ENCODE measurements at regions of chrX and their contacts with region 1.

Region 1: DNA sequence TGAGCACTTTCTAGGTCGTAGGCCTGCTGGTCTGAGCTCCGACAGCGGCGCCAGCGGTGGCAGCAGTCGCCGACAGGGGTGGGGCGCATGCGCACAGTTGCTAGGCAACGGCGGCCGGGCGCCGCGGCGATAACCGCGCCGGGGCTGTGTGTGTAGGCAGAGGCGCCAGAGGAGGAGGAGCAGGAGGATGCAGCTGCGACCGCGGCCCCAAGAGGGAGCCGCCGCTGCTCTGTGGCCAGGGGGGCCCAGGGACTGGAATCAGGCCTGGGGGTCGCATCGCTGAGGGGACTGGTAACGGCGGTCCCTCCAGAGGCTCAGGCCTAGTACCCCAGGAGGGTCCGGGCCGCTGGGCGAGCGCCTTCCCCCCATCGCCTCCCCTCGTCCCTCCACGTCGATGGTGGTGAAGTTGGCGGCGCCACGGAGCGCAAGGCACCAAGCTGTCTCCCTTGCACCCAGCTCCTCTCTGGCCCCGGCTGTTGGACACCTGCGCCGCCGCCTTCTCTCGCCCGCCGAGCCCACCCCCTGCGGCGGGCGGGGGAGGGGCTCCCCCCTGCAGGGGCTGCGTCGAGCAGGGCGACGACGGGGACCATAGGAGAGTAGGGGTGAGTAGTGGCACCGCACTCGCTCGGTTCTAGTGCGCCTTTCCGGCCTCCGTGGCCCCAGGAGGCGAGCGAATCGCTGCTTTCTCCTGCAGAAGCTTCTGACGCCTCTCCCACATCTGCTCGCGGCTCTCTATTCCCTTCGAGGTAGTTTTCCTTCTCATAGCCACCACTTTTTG is 58.6 kb upstream of the ZC4H2 start:
- DNase-seq: peak; percentile 84
- ATAC-seq: peak; percentile 93
- H3K4me3 Mint-ChIP-seq: peak within 1 kb of the TSS; percentile 94
- H3K27ac Mint-ChIP-seq: peak within 1 kb of the TSS; percentile 93
- H3K4me1 Mint-ChIP-seq: peaks cover 9% of the 10 kb centered on the region
- H3K27me3 Mint-ChIP-seq: no peaks in the 10 kb centered on the region

Region 2: DNA sequence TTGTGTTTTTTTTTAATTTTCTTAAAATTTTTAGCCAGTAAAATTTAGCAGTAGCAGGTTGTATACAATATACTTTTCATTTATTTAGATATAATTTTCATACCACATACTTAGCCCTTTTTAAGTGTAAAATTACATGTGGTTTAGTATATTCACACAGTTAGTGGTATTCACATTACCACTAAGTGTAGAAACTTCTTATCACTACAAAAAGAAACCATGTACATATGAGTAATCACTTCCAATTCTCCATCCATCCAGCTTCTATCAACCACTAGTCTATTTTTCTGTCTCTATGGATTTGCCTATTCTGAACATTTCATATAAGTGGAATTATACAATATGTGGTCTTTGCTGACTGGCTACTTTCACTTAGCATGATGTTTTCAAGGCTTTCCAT is 167.6 kb before region 1 on chrX:
- POLR2A ChIA-PET with region 1: no interaction called
- DNase-seq: no peak
- ATAC-seq: no peak
- H3K4me3 Mint-ChIP-seq: no peak overlapping the region
- H3K27ac Mint-ChIP-seq: no peak overlapping the region
- H3K4me1 Mint-ChIP-seq: peaks cover 7% of the 10 kb centered on the region
- H3K27me3 Mint-ChIP-seq: no peaks in the 10 kb centered on the region

Region 3: GRCh38 chrX:64975989-64976672 is 58.7 kb before region 1 on chrX and contains the start of gene ZC4H2:
- POLR2A ChIA-PET with region 1: interaction called, 13 read pairs
- DNase-seq: peak; percentile 57
- ATAC-seq: peak; percentile 99
- H3K4me3 Mint-ChIP-seq: peak within 1 kb of the TSS; percentile 90
- H3K27ac Mint-ChIP-seq: peak within 1 kb of the TSS; percentile 66
- H3K4me1 Mint-ChIP-seq: peaks cover 5% of the 10 kb centered on the region
- H3K27me3 Mint-ChIP-seq: no peaks in the 10 kb centered on the region
- total RNA-seq, gene ZC4H2: 13.0 to 17.3 TPM

Measured in activated naive CD8-positive, alpha-beta T cell treated with anti-CD3 and anti-CD28 coated beads, Interleukin-2, amount 10 ng/mL, durations not matched to agents 7 days and 5 days (primary cell).